MCF 10A (cell line): ENCODE measurements at regions of chr20 and their contacts with region 1.

Region 1: GRCh38 chr20:3710703-3711483 is 1.5 kb downstream of the SIGLEC1 start:
- DNase-seq: peak; percentile 60
- H3K4me3 Mint-ChIP-seq: no peak overlapping the region
- H3K27ac Mint-ChIP-seq: no peak overlapping the region
- H3K4me1 Mint-ChIP-seq: no peaks in the 10 kb centered on the region
- H3K27me3 Mint-ChIP-seq: no peaks in the 10 kb centered on the region
- CTCF ChIP-seq: peak; percentile 92

Region 2: GRCh38 chr20:3563548-3564177 is 147.2 kb before region 1 on chr20:
- CTCF ChIA-PET with region 1: interaction called, 8 read pairs
- POLR2A ChIA-PET with region 1: no interaction called
- intact Hi-C with region 1: loop called (anchors 2 kb)
- DNase-seq: peak; percentile 52
- H3K4me3 Mint-ChIP-seq: no peak overlapping the region
- H3K27ac Mint-ChIP-seq: no peak overlapping the region
- H3K4me1 Mint-ChIP-seq: no peaks in the 10 kb centered on the region
- H3K27me3 Mint-ChIP-seq: no peaks in the 10 kb centered on the region
- CTCF ChIP-seq: peak; percentile 60

Region 3: DNA sequence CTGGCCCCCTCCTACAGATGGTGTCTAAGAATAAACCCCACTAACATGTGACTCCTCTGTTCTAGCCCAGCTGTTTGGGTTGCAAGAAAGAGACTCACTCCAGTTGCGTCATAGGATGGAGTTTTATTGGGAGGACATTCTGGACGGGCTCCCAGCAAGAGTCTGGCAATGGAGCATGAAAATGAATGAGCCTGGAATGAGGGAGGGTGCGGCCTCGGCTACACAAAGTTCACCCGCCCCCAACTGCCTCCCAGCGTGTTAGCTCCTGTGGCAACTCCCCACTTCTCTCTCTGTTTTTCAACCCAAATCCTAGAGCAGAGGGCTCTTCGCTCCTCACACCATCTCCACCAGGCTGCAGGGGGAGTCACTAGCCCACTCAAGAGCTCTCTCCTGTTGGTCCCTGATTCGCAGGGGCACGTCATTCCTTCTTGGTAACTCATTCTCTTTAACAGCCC is 24.0 kb before region 1 on chr20:
- CTCF ChIA-PET with region 1: interaction called, 51 read pairs
- POLR2A ChIA-PET with region 1: interaction called, 5 read pairs
- intact Hi-C with region 1: no loop called
- DNase-seq: peak; percentile 94
- H3K4me3 Mint-ChIP-seq: no peak overlapping the region
- H3K27ac Mint-ChIP-seq: no peak overlapping the region
- H3K4me1 Mint-ChIP-seq: peaks cover 16% of the 10 kb centered on the region
- H3K27me3 Mint-ChIP-seq: no peaks in the 10 kb centered on the region
- CTCF ChIP-seq: no peak

Region 4: DNA sequence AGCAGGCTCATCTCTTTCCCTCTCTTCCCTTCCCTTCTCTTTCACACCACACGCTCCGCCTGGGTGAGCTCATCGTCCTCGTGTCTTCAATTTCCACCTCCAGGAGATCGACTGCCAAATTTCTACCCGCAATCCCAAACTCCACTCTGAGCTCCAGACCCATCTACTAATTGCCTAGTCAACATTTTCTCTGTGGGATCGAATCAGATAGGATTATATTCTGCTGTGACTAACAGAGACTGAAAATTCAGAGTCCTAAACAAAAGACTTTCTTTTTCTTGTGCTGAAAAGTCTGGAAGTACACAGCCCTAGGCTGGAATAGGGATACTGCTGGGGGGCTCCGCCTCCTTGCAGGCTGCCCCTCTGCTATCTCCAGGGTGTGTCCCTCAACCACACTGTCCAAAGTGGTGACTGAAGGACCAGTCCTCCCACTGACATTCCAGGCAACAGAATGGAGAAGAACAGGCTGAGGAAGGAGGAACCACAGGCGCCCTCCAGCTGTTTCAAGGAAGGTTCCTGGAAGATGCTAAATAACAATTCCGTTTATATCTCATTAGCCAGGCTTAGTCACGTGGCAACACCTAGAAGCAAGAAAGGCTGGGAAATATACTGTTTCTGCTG is 16.6 kb after region 1 on chr20:
- CTCF ChIA-PET with region 1: interaction called, 20 read pairs
- POLR2A ChIA-PET with region 1: interaction called, 4 read pairs
- intact Hi-C with region 1: no loop called
- DNase-seq: peak; percentile 26
- H3K4me3 Mint-ChIP-seq: peak overlapping the region; percentile 42
- H3K27ac Mint-ChIP-seq: no peak overlapping the region
- H3K4me1 Mint-ChIP-seq: peaks cover 13% of the 10 kb centered on the region
- H3K27me3 Mint-ChIP-seq: peaks cover 36% of the 10 kb centered on the region
- CTCF ChIP-seq: no peak

Region 5: GRCh38 chr20:3775457-3776108 is 64.7 kb after region 1 on chr20:
- CTCF ChIA-PET with region 1: no interaction called
- POLR2A ChIA-PET with region 1: no interaction called
- intact Hi-C with region 1: no loop called
- DNase-seq: no peak
- H3K4me3 Mint-ChIP-seq: no peak overlapping the region
- H3K27ac Mint-ChIP-seq: no peak overlapping the region
- H3K4me1 Mint-ChIP-seq: peaks cover 4% of the 10 kb centered on the region
- H3K27me3 Mint-ChIP-seq: no peaks in the 10 kb centered on the region
- CTCF ChIP-seq: no peak

Region 6: DNA sequence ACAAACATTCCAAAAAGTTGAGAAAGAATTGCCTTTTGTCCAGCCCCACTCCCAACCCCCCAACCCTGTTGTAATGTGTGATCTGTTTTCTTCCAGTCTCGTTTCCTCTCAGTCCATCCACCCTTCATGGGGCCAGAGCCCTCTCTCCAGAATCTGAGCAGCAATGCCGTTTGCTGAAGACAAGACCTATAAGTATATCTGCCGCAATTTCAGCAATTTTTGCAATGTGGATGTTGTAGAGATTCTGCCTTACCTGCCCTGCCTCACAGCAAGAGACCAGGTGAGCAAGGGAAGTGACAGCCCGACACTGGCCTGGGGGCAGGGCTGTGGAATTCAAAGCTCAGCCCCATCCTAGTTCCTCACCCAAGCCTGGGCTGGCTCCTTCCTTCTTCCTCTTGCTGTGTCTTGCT is 143.6 kb after region 1 on chr20:
- CTCF ChIA-PET with region 1: interaction called, 11 read pairs
- POLR2A ChIA-PET with region 1: no interaction called
- intact Hi-C with region 1: no loop called
- DNase-seq: no peak
- H3K4me3 Mint-ChIP-seq: no peak overlapping the region
- H3K27ac Mint-ChIP-seq: no peak overlapping the region
- H3K4me1 Mint-ChIP-seq: peaks cover 9% of the 10 kb centered on the region
- H3K27me3 Mint-ChIP-seq: no peaks in the 10 kb centered on the region
- CTCF ChIP-seq: no peak